ENCODE measurements at regions of chr9 and their contacts with region 1.

Region 1: GRCh38 chr9:126398403-126399058 is 71.9 kb downstream of the MVB12B start:
- H3K4me3 Mint-ChIP-seq: no peak overlapping the region
- H3K27ac Mint-ChIP-seq: no peak overlapping the region
- H3K4me1 Mint-ChIP-seq: peaks cover 75% of the 10 kb centered on the region
- H3K27me3 Mint-ChIP-seq: no peaks in the 10 kb centered on the region

Region 2: GRCh38 chr9:126301985-126302603 is 96.4 kb before region 1 on chr9:
- intact Hi-C with region 1: loop called (anchors 1 kb)
- H3K4me3 Mint-ChIP-seq: no peak overlapping the region
- H3K27ac Mint-ChIP-seq: no peak overlapping the region
- H3K4me1 Mint-ChIP-seq: peaks cover 5% of the 10 kb centered on the region
- H3K27me3 Mint-ChIP-seq: peaks cover 5% of the 10 kb centered on the region

Region 3: GRCh38 chr9:126317513-126317912 is 81.0 kb before region 1 on chr9:
- intact Hi-C with region 1: loop called (anchors 1 kb)
- H3K4me3 Mint-ChIP-seq: no peak overlapping the region
- H3K27ac Mint-ChIP-seq: no peak overlapping the region
- H3K4me1 Mint-ChIP-seq: no peaks in the 10 kb centered on the region
- H3K27me3 Mint-ChIP-seq: no peaks in the 10 kb centered on the region

Region 4: GRCh38 chr9:126471084-126471624 is 72.6 kb after region 1 on chr9:
- intact Hi-C with region 1: no loop called
- H3K4me3 Mint-ChIP-seq: peak overlapping the region; percentile 49
- H3K27ac Mint-ChIP-seq: peak overlapping the region; percentile 86
- H3K4me1 Mint-ChIP-seq: peaks cover 93% of the 10 kb centered on the region
- H3K27me3 Mint-ChIP-seq: peaks cover 14% of the 10 kb centered on the region